Thyroid gland (tissue), 4 donors: ENCODE measurements at regions of chr2 and their contacts with region 1.

Region 1: GRCh38 chr2:64653349-64654062 is at the start of gene SERTAD2:
- DNase-seq: peak; percentile 89 to 91
- H3K4me3 ChIP-seq: peak within 1 kb of the TSS; percentile 91 to 94 (median 94)
- H3K27ac ChIP-seq: peak within 1 kb of the TSS; percentile 99 to 100 (median 100)
- H3K4me1 ChIP-seq: peaks cover 20 to 40% of the 10 kb centered on the region in 2 donors
- H3K27me3 ChIP-seq: no peaks in the 10 kb centered on the region
- CTCF ChIP-seq: peak in 1 of 6 experiments; percentile 5
- POLR2A ChIP-seq: peak; percentile 66 to 97
- total RNA-seq, gene SERTAD2: 13.7 to 17.3 (median 16.6) TPM

Region 2: DNA sequence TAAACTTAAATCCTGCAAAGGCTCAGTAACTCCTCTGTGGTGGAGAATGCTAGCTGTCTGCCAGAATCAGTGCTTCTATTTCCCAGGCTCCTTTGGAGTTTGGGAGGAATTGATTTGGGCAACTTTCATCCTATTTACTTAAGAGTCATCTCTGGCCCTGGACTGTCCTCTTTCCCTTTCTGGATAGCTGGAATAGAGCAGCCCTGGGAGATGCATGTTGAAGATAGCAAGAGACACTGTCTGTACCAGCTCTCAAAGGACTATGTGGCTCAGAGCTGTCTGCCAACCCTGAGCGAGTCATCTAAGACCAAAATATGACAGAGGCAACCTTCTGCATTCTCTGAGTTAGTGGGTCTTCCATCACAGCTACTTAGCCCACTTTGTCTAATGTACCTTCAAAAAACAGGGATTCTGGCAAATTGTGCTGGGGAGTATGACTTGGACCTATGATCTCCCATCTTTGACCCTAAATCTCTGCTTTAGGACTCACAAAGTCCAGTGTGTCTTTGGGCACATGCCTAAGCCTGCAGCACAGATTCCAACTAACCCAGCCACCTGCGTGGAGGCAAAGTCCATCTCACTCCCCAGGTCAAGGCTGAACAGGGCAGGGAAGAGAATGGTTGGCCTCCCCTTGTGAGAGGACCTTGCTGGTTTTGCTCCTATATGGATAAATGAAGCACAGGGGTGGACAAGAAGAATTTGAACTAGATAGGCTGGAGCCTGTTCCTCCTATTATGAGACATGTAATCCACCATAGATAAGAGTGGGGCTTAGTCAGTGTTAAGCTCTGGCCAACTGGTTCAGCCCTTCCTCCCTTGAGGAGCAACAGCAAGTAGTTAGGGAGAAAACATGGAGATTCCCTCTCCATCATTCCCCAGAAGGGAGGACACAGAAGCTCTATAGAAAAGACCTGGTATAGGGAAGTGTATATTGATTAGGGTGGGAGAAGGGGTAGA is 410.1 kb before region 1 on chr2:
- intact Hi-C with region 1: no loop called
- DNase-seq: no peak
- H3K4me3 ChIP-seq: no peak overlapping the region
- H3K27ac ChIP-seq: no peak overlapping the region
- H3K4me1 ChIP-seq: no peaks in the 10 kb centered on the region
- H3K27me3 ChIP-seq: no peaks in the 10 kb centered on the region
- CTCF ChIP-seq: no peak
- POLR2A ChIP-seq: no peak

Region 3: DNA sequence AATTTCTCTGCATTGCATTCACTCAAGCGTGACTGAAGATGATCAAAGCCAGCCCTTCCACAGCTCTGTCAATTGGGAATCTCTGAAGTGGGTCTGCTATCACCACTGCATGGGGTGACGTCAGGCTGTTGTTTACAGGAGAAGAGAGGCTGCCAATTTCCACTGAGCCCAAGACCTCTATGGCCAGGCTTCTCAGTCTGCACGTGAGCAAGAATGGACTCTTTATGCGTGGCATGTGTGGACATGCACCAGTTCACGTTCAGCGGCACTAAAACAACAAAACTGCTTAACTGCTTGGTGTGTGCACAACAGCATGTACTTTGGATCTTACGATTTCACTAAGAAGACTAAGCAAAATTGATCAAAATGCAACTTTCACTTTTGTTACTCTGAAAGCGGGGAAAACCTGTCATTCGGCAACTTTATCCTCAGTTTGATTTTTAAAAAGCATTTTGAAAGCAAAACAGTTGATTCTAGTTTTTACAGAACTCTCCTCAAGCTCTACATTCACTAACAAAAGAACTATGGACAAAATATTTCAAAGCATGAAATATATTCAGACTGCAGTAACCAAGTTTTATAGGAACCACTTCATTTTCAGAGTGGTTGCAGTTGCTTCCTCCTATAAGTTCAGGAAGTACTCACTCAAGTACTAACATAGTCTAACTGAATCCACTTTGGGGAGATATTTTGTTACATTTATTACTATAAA is 77.2 kb after region 1 on chr2:
- intact Hi-C with region 1: loop called (anchors 5 kb)
- DNase-seq: peak; percentile 89 to 91
- H3K4me3 ChIP-seq: peak overlapping the region in 2 of 3 donors; percentile 16
- H3K27ac ChIP-seq: peak overlapping the region; percentile 70 to 87 (median 80)
- H3K4me1 ChIP-seq: peaks cover 29 to 42% of the 10 kb centered on the region in 2 donors
- H3K27me3 ChIP-seq: no peaks in the 10 kb centered on the region
- CTCF ChIP-seq: no peak
- POLR2A ChIP-seq: peak in 1 of 2 donors; percentile 50

Region 4: DNA sequence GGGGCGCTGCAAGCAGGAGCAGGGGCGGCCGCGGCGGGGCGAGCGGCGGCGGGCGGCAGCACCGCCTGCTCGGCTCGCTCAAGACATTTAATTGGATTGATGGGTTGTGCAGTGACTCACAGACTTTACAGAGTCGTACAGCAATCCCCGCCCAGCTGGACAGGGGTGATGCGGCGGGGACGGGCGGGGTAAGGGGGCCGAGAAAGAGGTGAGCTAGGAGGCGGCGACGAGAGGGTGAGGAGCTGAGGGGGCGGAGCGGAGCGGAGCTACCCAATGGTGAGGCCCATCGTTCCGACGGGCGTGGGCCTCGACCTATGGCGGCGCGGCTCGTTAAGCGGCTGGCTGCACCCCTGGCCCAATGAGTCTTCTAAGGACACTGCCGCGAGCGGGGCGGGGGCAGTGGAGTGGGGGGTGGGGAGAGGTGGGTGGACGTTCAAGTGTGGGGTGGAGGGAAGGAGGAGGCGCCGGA is 97.3 kb after region 1 on chr2:
- intact Hi-C with region 1: loop called (anchors 5 kb)
- DNase-seq: peak; percentile 99 to 100
- H3K4me3 ChIP-seq: peak overlapping the region; percentile 54 to 96 (median 74)
- H3K27ac ChIP-seq: peak overlapping the region; percentile 97 to 98 (median 98)
- H3K4me1 ChIP-seq: peaks cover 10 to 16% of the 10 kb centered on the region in 2 donors
- H3K27me3 ChIP-seq: no peaks in the 10 kb centered on the region
- CTCF ChIP-seq: no peak
- POLR2A ChIP-seq: peak; percentile 90 to 99